ENCODE measurements at regions of chr14 and their contacts with region 1.

Region 1: GRCh38 chr14:51121096-51121495 is 26.2 kb upstream of the TRIM9 start:
- DNase-seq: no peak
- H3K4me3 Mint-ChIP-seq: no peak overlapping the region
- H3K27ac Mint-ChIP-seq: no peak overlapping the region
- H3K4me1 Mint-ChIP-seq: peaks cover 23% of the 10 kb centered on the region
- H3K27me3 Mint-ChIP-seq: no peaks in the 10 kb centered on the region
- CTCF ChIP-seq: no peak

Region 2: DNA sequence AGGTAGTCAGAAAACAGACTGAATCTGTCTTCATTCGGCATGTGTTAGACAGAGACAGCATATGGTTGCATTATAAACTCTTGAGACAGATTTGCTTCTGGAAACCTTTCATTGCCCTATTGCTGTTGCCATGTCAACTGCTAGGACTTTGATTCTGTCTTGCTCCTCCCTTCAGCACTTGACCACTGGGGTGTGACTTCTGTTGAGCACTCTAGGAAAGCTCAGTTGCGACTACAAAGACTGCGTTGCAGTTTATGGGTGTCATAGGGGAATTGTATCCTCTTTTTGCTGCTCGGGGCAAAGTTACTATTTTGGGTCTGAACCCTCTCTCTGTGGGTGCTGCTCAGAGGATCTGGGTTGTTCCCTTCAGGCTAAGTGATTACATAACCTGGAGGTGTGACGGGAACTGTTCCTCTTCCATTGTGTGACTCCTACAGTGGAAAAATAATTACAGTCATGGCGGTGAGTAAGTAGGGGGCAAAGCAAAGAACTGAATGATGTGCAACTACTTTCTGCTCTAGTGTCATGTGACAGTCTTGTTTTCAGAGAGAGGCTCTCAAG is 18.1 kb after region 1 on chr14:
- CTCF ChIA-PET with region 1: no interaction called
- POLR2A ChIA-PET with region 1: interaction called, 10 read pairs
- intact Hi-C with region 1: no loop called
- DNase-seq: peak; percentile 86
- H3K4me3 Mint-ChIP-seq: no peak overlapping the region
- H3K27ac Mint-ChIP-seq: no peak overlapping the region
- H3K4me1 Mint-ChIP-seq: no peaks in the 10 kb centered on the region
- H3K27me3 Mint-ChIP-seq: peaks cover 6% of the 10 kb centered on the region
- CTCF ChIP-seq: no peak

Region 3: GRCh38 chr14:51873221-51873893 is 752.3 kb after region 1 on chr14:
- CTCF ChIA-PET with region 1: no interaction called
- POLR2A ChIA-PET with region 1: no interaction called
- intact Hi-C with region 1: no loop called
- DNase-seq: peak; percentile 89
- H3K4me3 Mint-ChIP-seq: no peak overlapping the region
- H3K27ac Mint-ChIP-seq: peak overlapping the region; percentile 79
- H3K4me1 Mint-ChIP-seq: peaks cover 11% of the 10 kb centered on the region
- H3K27me3 Mint-ChIP-seq: no peaks in the 10 kb centered on the region
- CTCF ChIP-seq: no peak